ENCODE measurements at regions of chr6 and their contacts with region 1.

Region 1: DNA sequence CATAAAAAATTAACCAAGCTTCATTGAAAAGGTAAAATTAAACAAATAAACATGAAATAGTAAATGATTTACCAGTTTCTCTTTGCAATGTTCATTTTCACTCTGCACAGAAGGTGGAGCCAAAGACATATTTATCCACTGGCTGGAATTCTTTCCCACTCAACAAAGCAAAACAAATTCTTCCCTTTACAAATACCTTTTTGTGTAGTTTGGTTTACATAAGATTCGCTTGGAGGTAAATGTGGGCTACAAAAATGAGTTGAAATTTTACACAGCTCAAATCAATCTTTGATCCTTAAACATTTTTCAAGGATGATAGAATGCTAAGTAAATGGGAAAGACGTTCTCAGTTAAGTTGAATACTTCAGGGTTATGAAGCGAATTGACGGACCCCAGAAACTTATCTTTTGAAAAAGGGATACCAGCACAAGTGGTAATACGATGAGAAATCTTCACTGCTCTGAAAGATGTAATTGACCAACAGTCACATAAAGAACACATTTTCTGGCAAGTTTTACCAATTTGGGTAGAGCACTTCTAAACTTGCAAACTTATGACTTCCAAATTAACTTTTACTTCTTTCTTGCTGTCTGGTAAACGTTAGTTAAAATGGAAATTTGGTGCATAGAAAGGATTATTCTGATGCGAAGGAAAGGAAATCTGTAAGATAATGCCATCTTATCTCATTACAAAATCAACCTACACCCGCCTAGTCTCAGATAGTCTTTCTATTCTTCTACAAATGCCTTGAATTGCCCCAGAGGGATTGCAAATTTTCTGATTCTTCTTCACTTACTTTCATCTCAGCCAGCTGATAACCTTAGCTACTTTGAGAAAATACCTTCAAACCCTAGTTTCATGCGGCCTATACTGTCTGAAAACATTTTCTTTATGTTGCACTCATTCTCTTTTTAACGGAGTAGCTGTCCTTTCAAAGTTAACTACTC is 4.7 kb upstream of the GJA1 start:
- ATAC-seq: peak in 4 of 8 experiments; percentile 11 to 34 (median 22)
- H3K4me3 ChIP-seq: no peak overlapping the region
- H3K27ac ChIP-seq: no peak overlapping the region
- H3K4me1 ChIP-seq: no peaks in the 10 kb centered on the region

Region 2: DNA sequence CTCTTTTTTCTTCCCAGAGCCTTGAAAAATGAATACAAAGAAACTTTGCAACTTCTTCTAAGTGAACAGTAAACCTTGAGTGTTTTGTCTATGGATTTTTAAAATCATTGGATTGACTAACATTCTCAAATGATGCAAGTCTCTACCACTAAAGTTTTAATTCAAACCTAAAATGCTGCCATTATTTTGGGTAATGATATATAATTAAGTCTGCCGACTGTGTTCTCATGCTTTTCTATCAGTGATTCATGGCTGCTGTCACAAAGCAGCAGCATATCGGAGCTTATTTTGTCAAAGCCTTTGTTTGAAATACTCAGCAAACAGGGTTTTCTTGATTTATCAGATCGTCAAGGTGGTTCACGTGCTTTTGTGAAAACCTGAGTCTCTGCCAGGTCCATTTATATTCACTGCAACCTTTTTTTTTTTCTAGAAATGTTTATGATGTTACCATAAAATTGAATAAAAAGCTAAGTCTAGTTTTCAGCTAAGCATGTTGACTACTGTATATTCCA is 100.9 kb after region 1 on chr6:
- in situ Hi-C with region 1: no loop called
- ATAC-seq: peak in 1 of 8 experiments; percentile 27
- H3K4me3 ChIP-seq: no peak overlapping the region
- H3K27ac ChIP-seq: no peak overlapping the region
- H3K4me1 ChIP-seq: peaks cover 0 to 7% of the 10 kb centered on the region in 2 donors

Region 3: GRCh38 chr6:122020588-122021264 is 589.9 kb after region 1 on chr6:
- in situ Hi-C with region 1: loop called in 6 of 9 experiments (anchors 10 to 25 kb)
- ATAC-seq: no peak
- H3K4me3 ChIP-seq: no peak overlapping the region
- H3K27ac ChIP-seq: no peak overlapping the region
- H3K4me1 ChIP-seq: no peaks in the 10 kb centered on the region

Region 4: GRCh38 chr6:122033539-122034181 is 602.9 kb after region 1 on chr6:
- in situ Hi-C with region 1: loop called in 6 of 9 experiments (anchors 10 to 25 kb)
- ATAC-seq: peak; percentile 67 to 93 (median 80)
- H3K4me3 ChIP-seq: no peak overlapping the region
- H3K27ac ChIP-seq: no peak overlapping the region
- H3K4me1 ChIP-seq: no peaks in the 10 kb centered on the region

Region 5: GRCh38 chr6:122184401-122184827 is 753.6 kb after region 1 on chr6:
- in situ Hi-C with region 1: loop called in 3 of 9 experiments (anchors 10 to 25 kb)
- ATAC-seq: peak in 4 of 8 experiments; percentile 41 to 78 (median 66)
- H3K4me3 ChIP-seq: no peak overlapping the region
- H3K27ac ChIP-seq: no peak overlapping the region
- H3K4me1 ChIP-seq: no peaks in the 10 kb centered on the region